ENCODE measurements at regions of chr2 and their contacts with region 1.

Region 1: DNA sequence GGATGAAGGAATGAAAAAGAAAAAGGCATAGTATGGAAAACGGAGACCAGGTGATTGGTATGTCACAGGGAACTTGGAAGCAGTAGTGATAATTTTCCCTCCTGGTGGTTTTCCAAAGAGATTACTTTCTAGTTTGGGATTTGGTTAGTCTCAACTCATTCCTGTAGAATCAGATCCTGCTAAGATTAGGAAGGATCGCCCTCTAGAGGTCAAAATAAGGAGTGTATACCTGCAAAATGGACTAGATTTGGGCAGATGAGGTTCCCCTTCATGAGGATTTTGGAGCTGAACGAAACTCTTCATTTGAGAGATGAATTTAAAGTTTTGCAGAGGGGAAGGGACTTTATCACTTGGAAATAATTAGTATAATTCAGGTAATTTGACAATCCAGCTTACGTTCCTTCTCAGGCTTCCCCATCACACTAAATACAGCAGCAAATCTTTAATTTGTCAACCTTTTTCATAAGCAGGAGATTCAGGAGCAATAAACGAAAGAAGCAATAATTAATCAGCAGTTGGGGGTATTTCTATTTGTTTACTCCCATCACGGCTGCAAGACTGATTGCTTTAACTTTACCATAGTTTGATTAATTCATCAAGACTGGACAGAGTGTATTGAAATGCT is 65.2 kb downstream of the CCDC195 start:
- DNase-seq: no peak
- ATAC-seq: peak; percentile 53
- H3K4me3 Mint-ChIP-seq: no peak overlapping the region
- H3K27ac Mint-ChIP-seq: no peak overlapping the region
- H3K4me1 Mint-ChIP-seq: no peaks in the 10 kb centered on the region
- H3K27me3 Mint-ChIP-seq: peaks cover 2% of the 10 kb centered on the region

Region 2: GRCh38 chr2:224369028-224369632 is 281.8 kb before region 1 on chr2:
- CTCF ChIA-PET with region 1: interaction called, 21 read pairs
- POLR2A ChIA-PET with region 1: no interaction called
- intact Hi-C with region 1: no loop called
- DNase-seq: no peak
- ATAC-seq: peak; percentile 60
- H3K4me3 Mint-ChIP-seq: no peak overlapping the region
- H3K27ac Mint-ChIP-seq: no peak overlapping the region
- H3K4me1 Mint-ChIP-seq: no peaks in the 10 kb centered on the region
- H3K27me3 Mint-ChIP-seq: no peaks in the 10 kb centered on the region

Region 3: DNA sequence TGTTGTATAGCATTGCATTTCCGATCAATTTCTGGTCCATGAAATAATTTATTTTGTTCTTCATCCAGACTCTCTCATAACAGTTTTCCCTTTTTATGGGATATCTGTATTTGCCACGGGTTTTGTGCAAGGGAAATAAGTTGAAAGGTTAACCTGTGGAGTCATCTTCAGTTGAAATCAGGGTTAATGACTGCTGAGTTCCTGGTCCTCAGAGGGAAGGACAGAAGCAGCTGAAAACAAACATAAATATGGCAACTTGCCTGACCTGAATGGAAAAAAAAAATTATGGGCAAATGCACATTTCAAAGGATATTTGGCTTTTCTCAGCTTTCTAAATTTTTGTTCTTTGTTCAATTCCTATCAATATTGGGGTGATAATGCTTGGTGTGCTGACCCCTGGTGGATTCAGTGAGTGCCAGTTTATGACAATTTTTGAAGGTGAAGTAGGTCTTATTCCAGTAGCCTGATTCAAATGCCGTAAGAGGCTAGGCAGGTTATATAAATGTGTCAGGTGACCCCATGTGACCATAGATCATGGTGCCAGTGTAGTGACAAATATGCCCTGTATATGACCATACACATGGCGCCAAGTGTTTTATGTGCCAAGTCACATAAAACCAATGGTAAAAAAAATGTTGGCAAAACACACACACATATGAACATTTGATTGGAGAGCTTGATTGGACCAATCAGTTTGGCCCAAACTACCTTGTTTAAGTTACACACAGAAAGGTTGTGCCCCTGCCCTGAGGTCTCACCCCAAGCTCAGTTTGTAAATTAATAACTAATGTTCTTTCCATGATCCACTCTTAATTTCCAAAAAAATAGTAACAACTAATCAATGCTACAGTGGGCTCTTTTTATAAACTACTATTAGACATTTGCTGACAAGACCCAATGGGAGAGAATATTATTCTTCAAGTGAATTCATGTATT is 201.4 kb before region 1 on chr2:
- CTCF ChIA-PET with region 1: no interaction called
- POLR2A ChIA-PET with region 1: no interaction called
- intact Hi-C with region 1: loop called in 1 of 2 experiments (anchors 5 kb)
- DNase-seq: peak; percentile 29
- ATAC-seq: peak; percentile 58
- H3K4me3 Mint-ChIP-seq: no peak overlapping the region
- H3K27ac Mint-ChIP-seq: no peak overlapping the region
- H3K4me1 Mint-ChIP-seq: no peaks in the 10 kb centered on the region
- H3K27me3 Mint-ChIP-seq: peaks cover 2% of the 10 kb centered on the region

Region 4: GRCh38 chr2:224711859-224712665 is 61.1 kb after region 1 on chr2:
- CTCF ChIA-PET with region 1: no interaction called
- POLR2A ChIA-PET with region 1: no interaction called
- intact Hi-C with region 1: no loop called
- DNase-seq: no peak
- ATAC-seq: no peak
- H3K4me3 Mint-ChIP-seq: no peak overlapping the region
- H3K27ac Mint-ChIP-seq: no peak overlapping the region
- H3K4me1 Mint-ChIP-seq: no peaks in the 10 kb centered on the region
- H3K27me3 Mint-ChIP-seq: peaks cover 13% of the 10 kb centered on the region

Measured in activated CD4-positive, alpha-beta T cell treated with anti-CD3 and anti-CD28 coated beads for 36 hours (primary cell).